ENCODE measurements at regions of chr2 and their contacts with region 1.

Region 1: GRCh38 chr2:10162586-10163497 is 40.3 kb downstream of the RRM2 start:
- DNase-seq: peak; percentile 56
- ATAC-seq: peak; percentile 66
- H3K4me3 Mint-ChIP-seq: no peak overlapping the region
- H3K27ac Mint-ChIP-seq: peak overlapping the region; percentile 91
- H3K4me1 Mint-ChIP-seq: 0 out of 2 replicates have a peak, but pooled peaks cover 3% of the 10 kb centered on the region
- H3K27me3 Mint-ChIP-seq: no peaks in the 10 kb centered on the region
- CTCF ChIP-seq: no peak

Region 2: GRCh38 chr2:10141736-10142642 is 20.9 kb before region 1 on chr2:
- CTCF ChIA-PET with region 1: interaction called, 14 read pairs
- POLR2A ChIA-PET with region 1: no interaction called
- DNase-seq: peak; percentile 68
- ATAC-seq: peak; percentile 89
- H3K4me3 Mint-ChIP-seq: no peak overlapping the region
- H3K27ac Mint-ChIP-seq: no peak overlapping the region; the same call in 1 of the 2 replicates
- H3K4me1 Mint-ChIP-seq: peaks cover 5% of the 10 kb centered on the region; the same call in 1 of the 2 replicates
- H3K27me3 Mint-ChIP-seq: no peaks in the 10 kb centered on the region
- CTCF ChIP-seq: peak; percentile 60

Region 3: GRCh38 chr2:11024259-11024645 is 861.4 kb after region 1 on chr2:
- CTCF ChIA-PET with region 1: no interaction called
- POLR2A ChIA-PET with region 1: no interaction called
- DNase-seq: no peak
- ATAC-seq: no peak
- H3K4me3 Mint-ChIP-seq: no peak overlapping the region
- H3K27ac Mint-ChIP-seq: no peak overlapping the region
- H3K4me1 Mint-ChIP-seq: peaks cover 30% of the 10 kb centered on the region
- H3K27me3 Mint-ChIP-seq: no peaks in the 10 kb centered on the region
- CTCF ChIP-seq: no peak

Measured in WTC11 (cell line).